ENCODE measurements at regions of chr12 and their contacts with region 1.

Region 1: DNA sequence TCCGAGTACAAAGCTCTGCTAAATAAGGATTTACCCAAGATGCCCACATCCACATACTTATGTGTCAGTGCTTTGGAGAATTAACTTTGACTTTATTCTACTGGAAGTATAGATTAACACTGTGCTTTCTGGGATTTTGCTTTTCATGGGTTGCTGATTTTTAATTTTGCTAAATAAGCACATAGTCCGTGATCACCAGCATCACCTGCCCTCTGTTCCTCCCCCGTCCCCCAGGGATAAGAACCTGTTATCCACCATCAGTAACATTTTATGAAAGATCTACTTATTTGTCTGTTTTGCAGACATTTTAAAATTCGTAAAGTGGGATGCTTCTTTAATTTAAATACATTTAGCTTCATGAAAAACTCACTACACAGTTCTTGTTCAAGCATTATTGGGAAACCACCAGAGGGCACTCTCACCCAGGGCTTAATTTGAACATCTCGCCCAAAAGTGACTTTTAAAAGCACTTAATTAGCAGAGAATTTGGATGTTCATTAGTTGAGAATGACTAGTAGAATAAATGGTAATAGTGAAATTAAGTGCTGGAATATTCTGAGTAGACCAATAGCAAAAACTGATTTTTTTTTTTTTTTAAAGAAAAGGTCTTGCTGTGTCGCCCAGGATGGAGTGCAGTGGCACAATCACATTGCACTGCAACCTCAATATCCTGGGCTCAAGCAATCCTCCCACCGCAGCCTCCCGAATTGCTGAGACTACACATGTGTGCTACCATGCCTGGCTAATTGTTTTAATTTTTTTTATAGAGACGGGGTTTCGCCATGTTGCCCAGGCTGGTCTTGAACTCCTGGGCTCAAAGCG is 35.7 kb downstream of the MRPL42 start:
- DNase-seq: peak; percentile 72
- ATAC-seq: peak; percentile 34
- H3K4me3 Mint-ChIP-seq: no peak overlapping the region
- H3K27ac Mint-ChIP-seq: no peak overlapping the region
- H3K4me1 Mint-ChIP-seq: peaks cover 12% of the 10 kb centered on the region
- H3K27me3 Mint-ChIP-seq: no peaks in the 10 kb centered on the region
- CTCF ChIP-seq: peak; percentile 87

Region 2: GRCh38 chr12:93514853-93515252 is 11.8 kb after region 1 on chr12:
- CTCF ChIA-PET with region 1: interaction called, 15 read pairs
- POLR2A ChIA-PET with region 1: no interaction called
- intact Hi-C with region 1: no loop called
- DNase-seq: no peak
- ATAC-seq: no peak
- H3K4me3 Mint-ChIP-seq: no peak overlapping the region
- H3K27ac Mint-ChIP-seq: no peak overlapping the region
- H3K4me1 Mint-ChIP-seq: no peaks in the 10 kb centered on the region
- H3K27me3 Mint-ChIP-seq: no peaks in the 10 kb centered on the region
- CTCF ChIP-seq: no peak

Region 3: DNA sequence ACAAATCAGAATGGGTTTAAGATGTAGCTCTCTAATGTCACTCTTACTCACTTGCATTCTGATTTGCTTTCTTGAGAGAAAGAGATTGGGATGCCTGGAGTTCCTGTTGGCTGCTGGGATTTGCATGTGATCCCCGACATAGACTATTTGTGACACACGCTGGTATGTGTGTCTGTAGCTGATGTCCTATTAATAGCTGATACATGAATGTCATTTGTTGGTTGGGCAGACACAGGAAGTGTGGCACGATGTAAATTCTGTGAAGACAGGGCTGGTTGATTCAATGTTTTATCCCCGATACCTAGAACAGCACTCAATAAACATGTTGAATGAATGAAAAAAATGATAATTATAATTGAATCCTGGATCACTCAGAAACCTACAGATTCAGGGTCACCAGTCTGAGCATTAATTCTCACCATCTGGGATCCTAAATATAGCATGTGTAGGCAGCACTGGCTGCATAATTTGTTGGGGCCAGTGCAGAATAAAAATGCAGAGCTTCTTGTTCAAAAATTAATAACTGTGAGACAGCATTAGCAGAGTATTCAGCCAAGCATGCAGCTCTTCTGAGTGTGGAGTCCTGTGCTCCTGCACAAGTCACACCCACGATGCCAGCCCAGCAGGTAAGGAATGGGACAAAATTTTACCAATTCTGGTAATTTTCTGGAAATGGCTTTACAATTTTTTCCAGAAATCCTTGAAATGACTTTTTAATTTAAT is 33.9 kb after region 1 on chr12:
- CTCF ChIA-PET with region 1: interaction called, 10 read pairs
- POLR2A ChIA-PET with region 1: no interaction called
- intact Hi-C with region 1: no loop called
- DNase-seq: no peak
- ATAC-seq: peak; percentile 34
- H3K4me3 Mint-ChIP-seq: no peak overlapping the region
- H3K27ac Mint-ChIP-seq: no peak overlapping the region
- H3K4me1 Mint-ChIP-seq: peaks cover 3% of the 10 kb centered on the region
- H3K27me3 Mint-ChIP-seq: no peaks in the 10 kb centered on the region
- CTCF ChIP-seq: no peak

Region 4: DNA sequence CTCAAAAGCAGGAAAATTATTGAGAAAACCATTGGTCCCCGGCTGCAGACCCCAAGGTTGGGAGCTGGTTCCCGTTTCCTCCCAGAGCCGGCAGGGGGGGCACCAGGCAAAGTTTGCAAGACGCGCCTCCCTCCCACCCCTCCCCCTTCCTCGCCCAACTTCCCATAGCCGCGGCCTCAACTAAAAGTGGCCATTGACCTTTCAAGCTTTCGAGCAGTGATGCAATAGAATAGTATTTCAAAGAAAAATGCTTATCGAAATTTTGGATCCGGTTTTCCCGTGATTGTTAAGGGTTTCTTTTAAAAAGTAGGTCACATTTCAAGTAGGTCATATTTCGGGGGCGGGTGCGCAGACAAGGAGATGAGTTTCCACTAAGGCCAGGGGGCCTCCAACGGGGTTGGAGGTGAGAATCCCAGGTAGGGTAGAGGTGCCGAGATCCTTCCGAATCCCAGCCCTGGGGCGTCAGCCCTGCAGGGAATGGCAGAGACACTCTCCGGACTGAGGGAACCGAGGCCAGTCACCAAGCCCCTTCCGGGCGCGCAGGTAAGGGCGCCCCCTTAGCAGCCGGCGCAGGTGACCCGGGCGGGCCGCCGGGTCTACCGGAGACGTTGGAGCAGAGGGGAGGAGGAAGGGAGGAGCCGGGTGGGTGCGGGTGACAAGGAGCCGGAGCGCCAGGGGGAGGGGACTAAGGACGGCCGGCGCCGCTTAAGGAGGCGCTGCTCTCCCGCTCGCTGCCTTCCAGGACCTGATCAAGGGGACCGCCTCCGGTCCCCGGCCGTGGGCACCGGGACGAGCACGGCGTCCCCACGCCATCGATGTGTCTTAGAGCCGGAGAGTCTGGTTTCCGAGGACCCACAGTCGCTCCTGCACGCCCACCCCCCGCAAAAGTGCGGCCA is 66.9 kb after region 1 on chr12:
- CTCF ChIA-PET with region 1: interaction called, 32 read pairs
- POLR2A ChIA-PET with region 1: interaction called, 3 read pairs
- intact Hi-C with region 1: loop called (anchors 5 kb)
- DNase-seq: peak; percentile 86
- ATAC-seq: peak; percentile 56
- H3K4me3 Mint-ChIP-seq: peak overlapping the region; percentile 81
- H3K27ac Mint-ChIP-seq: peak overlapping the region; percentile 88
- H3K4me1 Mint-ChIP-seq: peaks cover 26% of the 10 kb centered on the region
- H3K27me3 Mint-ChIP-seq: peaks cover 11% of the 10 kb centered on the region
- CTCF ChIP-seq: peak; percentile 79

Region 5: GRCh38 chr12:93742110-93742934 is 239.3 kb after region 1 on chr12:
- CTCF ChIA-PET with region 1: interaction called, 10 read pairs
- POLR2A ChIA-PET with region 1: no interaction called
- intact Hi-C with region 1: no loop called
- DNase-seq: peak; percentile 87
- ATAC-seq: peak; percentile 94
- H3K4me3 Mint-ChIP-seq: peak overlapping the region; percentile 80
- H3K27ac Mint-ChIP-seq: peak overlapping the region; percentile 95
- H3K4me1 Mint-ChIP-seq: peaks cover 36% of the 10 kb centered on the region
- H3K27me3 Mint-ChIP-seq: no peaks in the 10 kb centered on the region
- CTCF ChIP-seq: no peak

Region 6: GRCh38 chr12:93766796-93767523 is 263.9 kb after region 1 on chr12:
- CTCF ChIA-PET with region 1: interaction called, 15 read pairs
- POLR2A ChIA-PET with region 1: no interaction called
- intact Hi-C with region 1: no loop called
- DNase-seq: peak; percentile 55
- ATAC-seq: peak; percentile 80
- H3K4me3 Mint-ChIP-seq: no peak overlapping the region
- H3K27ac Mint-ChIP-seq: no peak overlapping the region
- H3K4me1 Mint-ChIP-seq: peaks cover 38% of the 10 kb centered on the region
- H3K27me3 Mint-ChIP-seq: no peaks in the 10 kb centered on the region
- CTCF ChIP-seq: peak; percentile 55

Region 7: GRCh38 chr12:93979189-93979588 is 476.2 kb after region 1 on chr12:
- CTCF ChIA-PET with region 1: interaction called, 11 read pairs
- POLR2A ChIA-PET with region 1: no interaction called
- intact Hi-C with region 1: no loop called
- DNase-seq: peak; percentile 44
- ATAC-seq: no peak
- H3K4me3 Mint-ChIP-seq: no peak overlapping the region
- H3K27ac Mint-ChIP-seq: no peak overlapping the region
- H3K4me1 Mint-ChIP-seq: peaks cover 20% of the 10 kb centered on the region
- H3K27me3 Mint-ChIP-seq: peaks cover 2% of the 10 kb centered on the region
- CTCF ChIP-seq: peak; percentile 35